ENCODE measurements at regions of chr6 and their contacts with region 1.

Region 1: DNA sequence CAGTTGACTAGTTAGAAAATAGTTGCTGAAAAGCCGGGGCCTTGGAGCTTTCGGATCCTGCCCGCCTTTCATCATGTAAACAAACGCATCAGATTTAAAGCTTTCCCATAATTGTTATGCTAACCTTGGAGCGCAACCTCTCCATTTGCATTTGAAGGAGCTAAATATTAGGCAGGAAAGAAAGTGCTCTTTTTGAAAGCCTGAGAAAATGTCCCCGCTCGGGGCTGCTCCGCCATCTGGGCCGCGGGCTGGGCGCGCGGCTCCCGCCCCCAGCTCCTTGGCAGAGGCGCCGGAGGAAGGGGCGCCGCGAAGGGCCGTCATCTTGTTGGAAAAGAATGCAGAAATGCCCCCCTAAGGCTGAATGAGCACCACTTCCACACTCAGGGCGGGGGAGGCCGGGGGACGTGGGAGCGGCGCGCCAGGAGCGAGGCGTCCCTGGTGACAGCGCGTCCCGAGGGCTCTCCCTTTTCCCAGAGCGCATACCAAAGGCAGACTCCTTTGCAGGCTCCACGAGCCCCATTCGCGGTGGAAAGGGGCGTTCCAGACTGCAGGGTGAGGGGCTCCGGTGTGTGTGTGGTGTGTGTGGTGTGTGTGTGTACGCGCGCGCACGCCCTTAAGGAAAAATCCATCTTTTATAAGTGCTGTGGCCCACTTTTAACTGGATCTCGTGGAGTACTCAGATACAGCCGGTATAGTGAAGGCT is 145.6 kb upstream of the ID4 start:
- DNase-seq: no peak
- H3K4me3 ChIP-seq: peak overlapping the region; percentile 46 to 55
- H3K27ac ChIP-seq: peak overlapping the region; percentile 56
- H3K4me1 ChIP-seq: peaks cover 14% of the 10 kb centered on the region
- H3K27me3 ChIP-seq: no peaks in the 10 kb centered on the region
- CTCF ChIP-seq: no peak
- POLR2A ChIP-seq: no peak

Region 2: DNA sequence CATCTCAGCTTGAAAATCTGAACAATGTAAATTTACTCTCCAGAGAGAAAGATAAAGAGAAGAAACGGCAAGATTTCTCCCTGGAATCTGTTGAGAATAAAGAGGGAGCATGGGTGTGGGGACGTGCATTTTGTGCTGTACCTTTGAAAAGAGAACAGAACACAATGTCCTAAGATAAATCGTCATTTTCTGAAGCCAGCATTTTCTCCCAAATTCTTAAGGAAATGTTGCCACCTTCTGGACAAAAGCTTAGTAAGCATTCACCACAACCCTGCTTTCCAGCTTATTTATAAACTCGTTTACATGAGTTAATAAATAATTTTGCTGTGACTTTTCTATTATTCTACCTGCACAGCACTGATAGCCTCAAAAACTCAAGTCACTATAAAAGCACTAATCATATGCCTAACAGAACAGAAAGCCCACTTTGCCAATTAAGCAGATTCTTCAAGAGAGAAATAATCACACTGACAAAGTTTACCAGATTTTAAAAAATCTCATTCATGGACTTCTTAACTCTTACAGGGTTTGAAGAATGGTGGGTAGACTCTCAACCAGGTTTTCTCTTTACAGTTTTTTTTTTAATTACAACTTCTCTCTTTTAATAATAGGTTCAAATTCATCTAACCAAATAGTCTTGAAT is 364.9 kb after region 1 on chr6:
- intact Hi-C with region 1: loop called (anchors 10 kb)
- DNase-seq: no peak
- H3K4me3 ChIP-seq: no peak overlapping the region
- H3K27ac ChIP-seq: no peak overlapping the region
- H3K4me1 ChIP-seq: no peaks in the 10 kb centered on the region
- H3K27me3 ChIP-seq: no peaks in the 10 kb centered on the region
- CTCF ChIP-seq: peak; percentile 36 to 63 (median 49)
- POLR2A ChIP-seq: no peak